ENCODE measurements at regions of chr1 and their contacts with region 1.

Region 1: GRCh38 chr1:248906009-248906752 is at the start of gene PGBD2:
- DNase-seq: peak; percentile 90 to 99 (median 95)
- ATAC-seq: peak; percentile 86
- H3K4me3 ChIP-seq: peak within 1 kb of the TSS; percentile 72 to 96
- H3K4me3 Mint-ChIP-seq: peak within 1 kb of the TSS; percentile 98
- H3K27ac ChIP-seq: peak within 1 kb of the TSS; percentile 85 to 95
- H3K27ac Mint-ChIP-seq: peak within 1 kb of the TSS; percentile 99
- H3K4me1 ChIP-seq: peaks cover 18% of the 10 kb centered on the region
- H3K4me1 Mint-ChIP-seq: peaks cover 41% of the 10 kb centered on the region
- H3K27me3 ChIP-seq: no peaks in the 10 kb centered on the region
- H3K27me3 Mint-ChIP-seq: no peaks in the 10 kb centered on the region
- CTCF ChIP-seq: peak; percentile 59
- total RNA-seq, gene PGBD2: 0.90 to 1.9 TPM

Region 2: GRCh38 chr1:248752161-248753028 is 153.8 kb before region 1 on chr1:
- CTCF ChIA-PET with region 1: no interaction called
- POLR2A ChIA-PET with region 1: no interaction called
- intact Hi-C with region 1: no loop called
- DNase-seq: no peak
- ATAC-seq: no peak
- H3K4me3 ChIP-seq: no peak overlapping the region
- H3K4me3 Mint-ChIP-seq: no peak overlapping the region
- H3K27ac ChIP-seq: no peak overlapping the region
- H3K27ac Mint-ChIP-seq: peak overlapping the region; percentile 42
- H3K4me1 ChIP-seq: peaks cover 9% of the 10 kb centered on the region
- H3K4me1 Mint-ChIP-seq: peaks cover 16% of the 10 kb centered on the region
- H3K27me3 ChIP-seq: peaks cover 0 to 2% of the 10 kb centered on the region in 2 experiments
- H3K27me3 Mint-ChIP-seq: peaks cover 4% of the 10 kb centered on the region
- CTCF ChIP-seq: no peak

Region 3: GRCh38 chr1:248786156-248786555 is 120.0 kb before region 1 on chr1:
- CTCF ChIA-PET with region 1: no interaction called
- POLR2A ChIA-PET with region 1: no interaction called
- intact Hi-C with region 1: no loop called
- DNase-seq: no peak
- ATAC-seq: no peak
- H3K4me3 ChIP-seq: no peak overlapping the region
- H3K4me3 Mint-ChIP-seq: no peak overlapping the region
- H3K27ac ChIP-seq: no peak overlapping the region
- H3K27ac Mint-ChIP-seq: no peak overlapping the region
- H3K4me1 ChIP-seq: no peaks in the 10 kb centered on the region
- H3K4me1 Mint-ChIP-seq: no peaks in the 10 kb centered on the region
- H3K27me3 ChIP-seq: peaks cover 0 to 2% of the 10 kb centered on the region in 2 experiments
- H3K27me3 Mint-ChIP-seq: peaks cover 16% of the 10 kb centered on the region
- CTCF ChIP-seq: no peak

Region 4: DNA sequence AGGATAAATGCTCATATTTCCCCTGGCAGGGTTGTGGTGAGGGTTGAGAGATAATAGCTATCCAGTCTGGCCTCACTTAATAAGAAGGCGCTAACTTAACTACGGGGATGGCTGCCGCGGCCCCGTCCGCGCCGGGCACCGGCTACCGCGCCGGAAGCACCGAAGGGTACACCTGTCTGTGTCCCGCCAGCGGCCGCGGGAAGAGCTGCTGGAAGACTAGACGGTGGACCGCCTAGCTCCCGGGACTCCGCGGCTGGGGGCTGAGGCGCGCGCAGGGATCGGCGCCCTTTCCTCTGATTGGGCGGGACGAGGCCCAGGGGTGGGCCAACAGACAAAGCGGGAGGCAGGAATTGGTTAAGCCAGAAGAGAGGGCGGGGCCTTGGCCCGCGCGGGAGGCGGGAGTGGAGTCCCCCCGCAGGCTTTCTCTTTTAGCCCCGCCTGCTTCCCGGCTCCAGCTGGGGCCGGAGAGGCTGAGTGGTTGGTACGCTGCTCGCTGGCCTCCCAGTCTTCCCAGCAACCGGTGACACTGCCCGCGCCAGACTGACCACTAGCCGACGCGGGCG is 68.3 kb before region 1 on chr1 and contains the start of gene ZNF672:
- CTCF ChIA-PET with region 1: interaction called, 3 read pairs
- POLR2A ChIA-PET with region 1: no interaction called
- intact Hi-C with region 1: loop called (anchors 1 kb)
- DNase-seq: peak; percentile 84 to 96 (median 94)
- ATAC-seq: peak; percentile 87
- H3K4me3 ChIP-seq: peak within 1 kb of the TSS; percentile 61 to 80
- H3K4me3 Mint-ChIP-seq: no peak within 1 kb of the TSS
- H3K27ac ChIP-seq: peak within 1 kb of the TSS; percentile 99
- H3K27ac Mint-ChIP-seq: peak within 1 kb of the TSS; percentile 99
- H3K4me1 ChIP-seq: peaks cover 24% of the 10 kb centered on the region
- H3K4me1 Mint-ChIP-seq: peaks cover 33% of the 10 kb centered on the region
- H3K27me3 ChIP-seq: peaks cover 0 to 4% of the 10 kb centered on the region in 2 experiments
- H3K27me3 Mint-ChIP-seq: peaks cover 2% of the 10 kb centered on the region
- CTCF ChIP-seq: no peak
- total RNA-seq, gene ZNF672: 33.8 to 33.9 TPM

Region 5: DNA sequence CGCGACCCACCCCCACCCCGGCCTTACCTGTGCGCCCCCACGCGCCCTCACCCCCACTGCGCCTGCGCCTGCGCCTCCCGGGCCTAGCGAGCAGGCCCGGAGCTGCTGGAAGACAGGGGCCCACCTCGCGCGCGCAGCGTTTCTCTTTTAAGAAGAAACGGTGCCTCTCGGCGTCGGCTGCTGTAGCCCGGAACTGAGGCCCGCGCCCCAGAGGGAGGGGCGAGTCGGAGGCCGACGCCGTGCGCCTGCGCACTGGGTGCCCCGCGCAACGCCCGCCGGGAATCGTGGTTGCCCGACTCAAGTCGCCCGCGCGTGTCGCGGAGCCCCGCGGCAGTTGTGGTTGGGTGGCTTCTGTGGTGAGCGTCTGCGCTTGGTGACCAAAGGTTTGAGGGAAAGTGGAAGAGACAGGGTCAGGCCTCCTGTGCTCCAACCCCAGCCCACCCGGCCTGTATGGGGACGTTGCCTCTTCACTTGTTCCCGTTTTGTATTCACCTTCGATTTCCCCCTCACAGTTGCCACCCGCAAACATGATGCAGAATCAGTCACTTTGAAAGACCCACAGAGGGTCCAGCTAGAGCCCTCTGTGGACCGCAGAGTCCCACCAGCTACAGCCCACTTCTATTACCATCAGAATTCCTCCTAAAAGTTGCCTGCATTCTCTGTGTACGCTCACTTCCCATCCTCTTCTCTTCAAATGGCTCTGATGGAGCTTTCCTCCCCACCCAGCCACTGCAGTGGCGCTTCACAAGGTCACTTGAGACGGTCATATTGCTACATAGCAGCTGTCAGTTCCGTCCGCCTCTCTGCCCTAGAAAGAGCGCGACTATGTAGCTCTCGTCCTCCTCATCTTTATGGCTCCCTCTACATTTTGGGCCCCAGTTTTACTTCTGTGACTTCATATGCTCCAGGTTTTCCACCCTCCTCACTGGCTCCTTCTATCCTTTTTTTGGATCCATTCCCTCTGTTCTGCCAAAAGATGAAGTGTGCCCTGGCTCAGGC is 47.0 kb before region 1 on chr1 and contains the start of gene ZNF692:
- CTCF ChIA-PET with region 1: interaction called, 5 read pairs
- POLR2A ChIA-PET with region 1: interaction called, 9 read pairs
- intact Hi-C with region 1: loop called (anchors 1 kb)
- DNase-seq: peak; percentile 92 to 98 (median 96)
- ATAC-seq: peak; percentile 83
- H3K4me3 ChIP-seq: peak within 1 kb of the TSS; percentile 60 to 72
- H3K4me3 Mint-ChIP-seq: peak within 1 kb of the TSS; percentile 82
- H3K27ac ChIP-seq: peak within 1 kb of the TSS; percentile 75 to 82
- H3K27ac Mint-ChIP-seq: peak within 1 kb of the TSS; percentile 97
- H3K4me1 ChIP-seq: peaks cover 50% of the 10 kb centered on the region
- H3K4me1 Mint-ChIP-seq: peaks cover 54% of the 10 kb centered on the region
- H3K27me3 ChIP-seq: no peaks in the 10 kb centered on the region
- H3K27me3 Mint-ChIP-seq: no peaks in the 10 kb centered on the region
- CTCF ChIP-seq: no peak
- total RNA-seq, gene ZNF692: 18.7 to 19.2 TPM

Region 6: DNA sequence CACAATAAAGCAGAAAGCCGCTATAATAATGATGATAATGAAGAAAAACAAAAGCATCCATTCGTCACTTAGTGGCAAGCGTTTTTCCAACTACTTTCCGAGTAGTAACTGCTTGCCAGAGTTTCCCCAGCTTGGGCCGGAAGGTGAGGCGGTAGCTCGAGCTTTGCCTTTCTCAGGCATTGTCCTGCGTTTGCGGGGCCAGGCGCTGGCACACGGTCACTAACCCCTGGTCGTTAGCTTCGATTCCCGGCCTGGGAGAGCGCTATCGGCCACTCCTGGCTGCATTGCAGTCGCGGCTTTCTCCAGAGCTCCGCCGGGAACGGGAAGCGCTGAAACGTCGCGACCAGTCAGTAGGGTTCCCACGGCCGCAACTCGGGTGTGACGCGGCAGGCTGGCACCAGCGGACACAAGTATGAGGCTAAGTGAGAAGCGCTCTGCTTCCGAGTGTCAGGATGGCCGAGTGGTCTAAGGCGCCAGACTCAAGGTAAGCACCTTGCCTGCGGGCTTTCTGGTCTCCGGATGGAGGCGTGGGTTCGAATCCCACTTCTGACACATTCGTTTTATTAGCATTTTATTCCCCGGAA is 32.7 kb before region 1 on chr1:
- CTCF ChIA-PET with region 1: interaction called, 4 read pairs
- POLR2A ChIA-PET with region 1: interaction called, 11 read pairs
- intact Hi-C with region 1: loop called (anchors 1 kb)
- DNase-seq: peak; percentile 88 to 95 (median 92)
- ATAC-seq: peak; percentile 77
- H3K4me3 ChIP-seq: peak overlapping the region; percentile 78 to 87
- H3K4me3 Mint-ChIP-seq: peak overlapping the region; percentile 98
- H3K27ac ChIP-seq: peak overlapping the region; percentile 74 to 85
- H3K27ac Mint-ChIP-seq: peak overlapping the region; percentile 98
- H3K4me1 ChIP-seq: peaks cover 8% of the 10 kb centered on the region
- H3K4me1 Mint-ChIP-seq: peaks cover 24% of the 10 kb centered on the region
- H3K27me3 ChIP-seq: no peaks in the 10 kb centered on the region
- H3K27me3 Mint-ChIP-seq: no peaks in the 10 kb centered on the region
- CTCF ChIP-seq: no peak

Region 7: GRCh38 chr1:248924696-248925532 is 18.7 kb after region 1 on chr1:
- CTCF ChIA-PET with region 1: interaction called, 4 read pairs
- POLR2A ChIA-PET with region 1: no interaction called
- intact Hi-C with region 1: loop called (anchors 1 kb)
- DNase-seq: peak in 7 of 9 experiments; percentile 24 to 81 (median 65)
- ATAC-seq: peak; percentile 95
- H3K4me3 ChIP-seq: no peak overlapping the region
- H3K4me3 Mint-ChIP-seq: peak overlapping the region; percentile 8
- H3K27ac ChIP-seq: no peak overlapping the region
- H3K27ac Mint-ChIP-seq: peak overlapping the region; percentile 47
- H3K4me1 ChIP-seq: peaks cover 10% of the 10 kb centered on the region
- H3K4me1 Mint-ChIP-seq: peaks cover 13% of the 10 kb centered on the region
- H3K27me3 ChIP-seq: no peaks in the 10 kb centered on the region
- H3K27me3 Mint-ChIP-seq: no peaks in the 10 kb centered on the region
- CTCF ChIP-seq: peak; percentile 86